Left cardiac atrium (tissue), 4 donors: ENCODE measurements at regions of chr19 and their contacts with region 1.

Region 1: DNA sequence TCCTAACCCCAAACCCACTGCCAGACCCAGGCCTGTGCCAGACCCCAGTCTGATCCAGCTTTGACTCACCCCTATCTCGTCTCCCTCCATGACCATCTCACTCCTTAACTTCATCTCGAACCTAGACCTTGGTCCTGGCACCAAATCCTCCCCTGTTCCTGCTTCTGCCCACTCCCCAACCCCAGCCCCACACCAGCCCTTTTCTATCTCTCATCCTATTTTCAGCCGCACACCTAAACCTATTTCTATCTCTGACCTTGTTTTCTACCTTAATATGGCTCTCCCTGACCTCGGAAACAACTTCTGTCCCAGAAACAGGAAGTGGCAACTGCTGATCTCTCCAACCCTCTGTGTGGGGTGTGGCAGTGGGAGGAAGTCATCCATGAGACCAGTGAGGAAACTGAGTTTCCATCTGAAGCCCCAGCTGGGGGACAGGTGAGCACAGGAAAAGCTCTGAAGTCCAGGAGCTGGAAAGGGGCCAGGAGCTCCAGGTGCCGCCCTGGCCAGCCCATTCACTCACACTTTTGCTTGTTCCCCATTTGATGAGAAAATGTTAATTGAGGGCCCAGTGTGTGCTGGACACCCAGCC is 13.7 kb downstream of the PTH2 start:
- DNase-seq: no peak
- ATAC-seq: no peak

Region 2: DNA sequence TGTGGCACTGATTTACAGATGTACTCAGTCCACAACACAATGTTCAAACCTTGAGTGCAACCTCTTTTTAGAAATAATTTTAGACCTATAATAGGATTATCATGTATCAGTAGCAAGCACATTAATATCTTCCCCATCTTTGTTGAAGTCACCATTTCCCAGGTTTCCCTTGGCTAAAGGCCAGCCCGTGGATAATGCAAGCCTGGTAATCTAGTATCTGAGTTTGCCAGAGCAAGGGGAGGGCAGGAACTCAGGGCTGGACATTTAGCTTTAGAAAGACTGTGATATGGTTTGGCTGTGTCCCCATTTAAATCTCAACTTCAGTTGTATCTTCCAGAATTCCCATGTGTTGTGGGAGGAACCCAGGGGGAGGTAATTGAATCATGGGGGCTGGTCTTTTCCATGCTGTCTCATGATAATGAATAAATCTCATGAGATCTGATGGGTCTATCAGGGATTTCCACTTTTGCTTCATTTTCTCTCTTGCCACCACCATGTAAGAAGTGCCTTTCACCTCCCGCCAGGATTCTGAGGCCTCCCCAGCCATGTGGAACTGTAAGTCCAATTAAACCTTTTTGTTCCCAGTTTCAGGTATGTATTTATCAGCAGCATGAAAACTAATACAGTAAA is 122.3 kb before region 1 on chr19:
- intact Hi-C with region 1: loop called in 1 of 2 experiments (anchors 10 kb)
- DNase-seq: no peak
- ATAC-seq: no peak

Region 3: DNA sequence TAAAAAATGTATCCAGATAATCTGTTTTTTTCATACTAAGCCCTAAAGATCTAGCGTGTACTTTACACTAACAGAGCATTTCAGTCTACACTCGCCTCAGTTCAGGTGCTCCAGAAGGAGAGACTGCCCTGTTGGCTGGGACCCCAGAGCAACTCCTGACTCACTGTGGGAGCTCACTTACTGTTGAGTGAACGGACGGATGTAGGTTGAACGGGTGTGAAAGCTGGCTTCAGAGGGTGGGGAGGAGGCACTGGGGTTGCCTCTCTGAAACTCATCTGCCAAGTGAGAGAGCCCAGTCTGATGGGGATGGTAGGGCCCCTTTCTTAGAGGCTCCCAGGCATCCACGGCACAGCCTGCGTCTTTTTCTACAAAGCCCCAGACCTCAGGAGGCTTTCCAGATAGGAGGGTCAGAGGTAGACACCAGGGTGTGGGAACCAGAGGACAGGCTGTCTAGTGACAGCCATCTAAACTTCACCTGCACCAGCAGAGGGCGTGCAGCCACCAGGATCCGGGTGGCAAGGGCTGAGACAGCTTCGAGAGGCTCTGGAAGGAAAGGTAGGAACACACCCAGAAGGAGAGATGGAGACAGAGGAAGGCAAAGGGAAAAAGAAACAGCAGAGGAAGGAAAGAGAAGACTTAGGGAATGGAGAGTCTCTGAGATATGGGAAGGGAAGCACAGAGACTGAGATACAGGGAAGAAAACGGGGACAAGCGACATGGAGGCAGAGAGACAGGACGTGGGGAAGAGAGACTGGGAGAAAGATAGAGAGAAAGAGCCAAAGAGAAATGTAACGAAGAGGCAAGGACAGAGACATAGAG is 17.7 kb before region 1 on chr19:
- intact Hi-C with region 1: no loop called
- DNase-seq: peak; percentile 79
- ATAC-seq: peak; percentile 80 to 85